Endothelial cell of umbilical vein (primary cell): ENCODE measurements at regions of chr1 and their contacts with region 1.

Region 1: GRCh38 chr1:44010935-44011471 is 19.6 kb downstream of the CCDC24 start:
- DNase-seq: no peak
- H3K4me3 ChIP-seq: no peak overlapping the region
- H3K27ac ChIP-seq: no peak overlapping the region
- H3K4me1 ChIP-seq: no peaks in the 10 kb centered on the region
- H3K27me3 ChIP-seq: peaks cover 0 to 4% of the 10 kb centered on the region in 2 experiments
- CTCF ChIP-seq: no peak
- POLR2A ChIP-seq: no peak

Region 2: DNA sequence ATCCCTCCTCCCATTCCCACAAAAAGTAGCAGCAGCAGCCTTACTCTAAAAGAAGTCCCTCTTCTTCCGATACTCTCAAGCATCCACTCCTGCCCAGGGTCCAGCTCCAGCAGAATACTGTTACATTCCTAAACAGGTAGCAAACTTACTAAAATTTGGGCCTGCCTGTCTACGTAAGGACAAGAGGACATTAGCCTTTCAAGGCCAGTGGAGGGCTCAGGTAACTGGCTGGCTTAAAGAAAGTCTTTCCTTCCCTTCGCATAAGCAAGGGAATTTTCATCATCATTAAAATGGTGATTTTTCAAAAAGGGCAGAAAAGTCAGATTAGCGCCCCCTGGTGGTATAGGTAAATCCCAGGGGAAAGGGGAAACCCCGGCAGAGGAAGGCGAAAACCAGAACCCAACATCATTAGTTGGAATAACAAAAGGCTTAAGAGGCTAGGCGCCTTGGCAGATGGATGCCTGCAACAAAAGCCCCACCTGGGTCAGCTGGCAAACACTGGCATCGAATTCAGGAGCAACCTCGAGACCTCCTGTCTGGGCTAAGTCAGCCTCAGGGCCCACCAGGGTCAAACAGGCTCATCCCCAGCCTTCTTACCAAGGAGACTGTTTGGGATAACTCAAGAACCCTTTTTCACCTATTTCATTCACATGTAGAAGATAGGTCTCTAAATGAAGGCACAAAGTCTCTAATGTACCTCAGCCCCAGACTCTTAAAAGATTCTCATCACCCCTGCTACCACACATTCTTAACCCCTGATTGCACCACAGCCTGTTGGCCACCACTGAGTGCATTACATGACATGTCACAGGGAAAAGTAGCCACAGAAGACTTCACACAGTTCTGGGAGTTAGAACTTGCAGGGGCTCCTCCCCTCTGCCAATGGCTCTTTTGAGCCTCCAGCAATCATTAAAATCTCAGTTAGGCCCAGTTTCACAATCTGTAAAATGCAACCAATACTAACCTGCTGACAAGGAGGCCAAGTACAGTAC is 307.4 kb after region 1 on chr1:
- CTCF ChIA-PET with region 1: no interaction called
- POLR2A ChIA-PET with region 1: no interaction called
- dilution Hi-C with region 1: no loop called
- intact Hi-C with region 1: loop called (anchors 5 kb)
- DNase-seq: peak; percentile 33
- H3K4me3 ChIP-seq: no peak overlapping the region
- H3K27ac ChIP-seq: no peak overlapping the region
- H3K4me1 ChIP-seq: no peaks in the 10 kb centered on the region
- H3K27me3 ChIP-seq: no peaks in the 10 kb centered on the region
- CTCF ChIP-seq: peak; percentile 76 to 83
- POLR2A ChIP-seq: no peak

Region 3: DNA sequence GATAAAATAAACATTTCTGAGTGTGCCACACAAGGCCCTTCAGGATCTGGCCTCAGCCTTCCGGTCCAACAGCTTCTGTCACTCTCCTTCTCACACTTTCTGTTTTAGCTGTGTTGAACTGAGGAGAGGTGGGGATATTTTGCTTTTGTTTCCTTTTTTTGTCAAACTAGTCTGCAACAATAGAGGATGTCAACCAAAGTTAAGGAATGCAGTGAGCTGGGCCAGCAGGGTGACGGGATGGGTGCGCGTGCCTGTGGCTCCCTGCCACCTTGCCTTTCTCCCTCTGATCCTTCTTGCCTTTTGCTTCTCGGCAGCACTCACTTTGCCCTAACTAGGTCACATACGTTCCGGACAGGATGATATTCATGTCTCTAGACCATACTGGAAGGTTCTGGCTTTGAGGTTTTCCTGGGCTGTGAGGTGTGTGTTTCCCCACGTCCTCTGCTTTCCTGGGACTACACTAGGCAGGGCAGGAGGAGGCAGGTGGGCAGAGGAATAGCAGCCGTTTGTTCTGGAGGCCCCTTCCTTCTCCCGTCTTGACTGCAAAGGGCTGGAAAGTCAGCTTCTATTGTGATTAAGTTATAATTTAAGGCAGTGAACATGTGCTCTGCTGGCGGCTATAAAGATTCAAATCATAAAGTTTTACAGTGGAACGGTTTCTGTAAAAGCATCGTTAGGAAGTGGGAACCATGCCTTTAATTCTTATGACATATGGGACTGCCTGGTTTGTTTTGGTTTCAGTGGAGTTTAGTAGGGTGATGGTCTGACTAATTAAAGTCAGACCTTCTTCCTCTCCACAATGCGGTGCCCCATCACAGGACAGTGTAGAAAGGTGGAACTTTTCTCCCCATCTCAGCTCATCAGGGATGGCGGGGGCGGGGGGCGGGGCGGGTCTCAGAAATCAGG is 461.9 kb after region 1 on chr1:
- CTCF ChIA-PET with region 1: no interaction called
- POLR2A ChIA-PET with region 1: no interaction called
- dilution Hi-C with region 1: no loop called
- intact Hi-C with region 1: no loop called
- DNase-seq: peak; percentile 9
- H3K4me3 ChIP-seq: no peak overlapping the region
- H3K27ac ChIP-seq: no peak overlapping the region
- H3K4me1 ChIP-seq: no peaks in the 10 kb centered on the region
- H3K27me3 ChIP-seq: peaks cover 2 to 11% of the 10 kb centered on the region in 2 experiments
- CTCF ChIP-seq: no peak
- POLR2A ChIP-seq: no peak